Posterior cingulate gyrus (tissue), 11 donors: ENCODE measurements at regions of chr9 and their contacts with region 1.

Region 1: GRCh38 chr9:105881654-105882349 is 187.5 kb downstream of the TMEM38B start:
- DNase-seq: peak; percentile 29 to 91 (median 76)

Region 2: GRCh38 chr9:105141146-105141975 is 740.4 kb before region 1 on chr9:
- intact Hi-C with region 1: no loop called
- DNase-seq: no peak

Region 3: GRCh38 chr9:105842023-105842644 is 39.7 kb before region 1 on chr9:
- intact Hi-C with region 1: loop called (anchors 1 kb)
- DNase-seq: peak in 3 of 10 donors; percentile 22 to 52 (median 34)

Region 4: DNA sequence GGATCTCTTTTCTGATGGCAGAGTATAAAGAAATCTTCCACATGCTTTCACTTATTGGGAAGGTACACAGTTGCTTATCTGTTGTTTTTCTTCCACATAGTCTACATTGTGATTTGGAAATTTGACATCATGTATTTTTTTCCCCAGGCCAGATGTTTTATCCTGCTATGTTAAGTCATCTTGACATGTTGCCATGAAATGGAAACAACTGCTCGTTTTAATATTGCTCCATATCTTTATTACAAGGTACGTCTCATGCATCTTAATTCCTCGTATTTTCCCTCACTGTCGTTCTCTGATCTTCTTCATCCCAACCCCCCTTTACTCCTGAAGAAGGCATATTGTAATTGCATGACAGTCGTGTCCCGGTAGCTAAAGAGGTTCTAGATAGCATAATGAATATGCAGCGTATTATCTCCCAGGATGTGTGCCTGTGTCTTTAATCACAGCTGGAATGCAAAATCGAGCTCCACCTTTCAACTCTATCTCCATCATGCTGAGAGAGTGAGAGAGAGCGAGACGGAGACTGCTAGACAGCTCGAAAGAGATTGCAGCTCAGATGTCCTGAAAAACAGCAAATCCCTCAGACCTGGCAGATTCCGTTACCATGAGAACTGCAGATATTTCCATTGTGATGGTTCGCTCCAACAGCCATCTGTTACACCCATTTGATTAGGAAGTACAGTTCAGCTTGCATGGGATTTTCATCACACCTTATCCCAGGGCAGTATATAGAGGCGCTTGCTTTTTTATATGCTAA is 94.3 kb after region 1 on chr9:
- intact Hi-C with region 1: no loop called
- DNase-seq: no peak

Region 5: DNA sequence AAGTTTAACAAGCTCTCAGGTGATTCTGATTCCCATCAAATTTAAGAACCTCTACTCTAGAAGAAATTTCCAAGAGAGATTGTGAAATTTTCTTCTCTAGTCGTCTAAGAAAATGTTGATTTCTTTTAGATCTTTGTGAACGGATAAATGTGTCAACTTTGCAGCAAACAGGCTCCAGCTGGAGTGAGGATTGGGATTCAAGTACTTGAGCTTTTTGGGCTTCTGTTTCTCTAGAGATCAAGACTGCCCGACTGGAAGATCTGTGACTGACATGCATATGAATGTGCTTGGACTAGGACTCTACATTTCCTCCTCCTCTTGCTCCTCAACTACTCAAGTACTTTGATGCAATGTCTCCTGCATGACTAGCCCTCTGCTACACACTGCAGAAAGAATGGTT is 200.8 kb after region 1 on chr9:
- intact Hi-C with region 1: no loop called
- DNase-seq: no peak